Aorta (tissue), 5 donors: ENCODE measurements at regions of chr1 and their contacts with region 1.

Region 1: DNA sequence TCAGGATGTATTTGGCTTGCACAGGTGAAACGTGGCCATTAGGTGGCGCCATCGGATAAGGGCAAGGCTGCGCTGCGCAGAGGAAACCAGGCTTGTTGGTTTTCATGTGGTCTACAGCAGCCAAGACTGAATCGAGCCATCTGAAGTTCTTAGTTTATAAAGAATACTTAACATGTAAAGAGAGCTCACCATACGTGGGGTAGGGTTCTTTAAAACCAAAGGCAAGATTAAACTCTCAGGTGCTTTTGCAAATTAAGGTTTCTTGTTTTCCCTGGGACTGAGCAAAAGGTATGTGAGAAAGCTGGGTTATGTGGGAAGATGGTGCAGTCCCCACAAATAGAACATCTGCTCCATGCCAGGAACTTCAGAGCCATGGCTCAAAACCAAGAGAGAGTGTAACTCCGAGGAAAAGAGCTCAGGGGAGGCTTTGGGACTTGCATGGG is 9.3 kb downstream of the MASP2 start:
- DNase-seq: peak; percentile 90 to 95
- ATAC-seq: peak; percentile 94
- H3K4me3 ChIP-seq: no peak overlapping the region
- H3K27ac ChIP-seq: no peak overlapping the region
- H3K4me1 ChIP-seq: peaks cover 0 to 2% of the 10 kb centered on the region in 2 donors
- H3K27me3 ChIP-seq: no peaks in the 10 kb centered on the region

Region 2: GRCh38 chr1:10057343-10057742 is 980.4 kb before region 1 on chr1:
- intact Hi-C with region 1: no loop called
- DNase-seq: peak; percentile 67 to 81
- ATAC-seq: peak; percentile 74
- H3K4me3 ChIP-seq: no peak overlapping the region
- H3K27ac ChIP-seq: no peak overlapping the region
- H3K4me1 ChIP-seq: no peaks in the 10 kb centered on the region
- H3K27me3 ChIP-seq: no peaks in the 10 kb centered on the region

Region 3: GRCh38 chr1:11059990-11060830 is 22.4 kb after region 1 on chr1 and contains the start of gene SRM:
- intact Hi-C with region 1: loop called in 1 of 2 experiments (anchors 1 kb)
- DNase-seq: peak; percentile 93 to 96
- ATAC-seq: peak; percentile 98
- H3K4me3 ChIP-seq: peak within 1 kb of the TSS; percentile 73
- H3K27ac ChIP-seq: peak within 1 kb of the TSS in 1 of 2 donors; percentile 46
- H3K4me1 ChIP-seq: no peaks in the 10 kb centered on the region
- H3K27me3 ChIP-seq: no peaks in the 10 kb centered on the region
- total RNA-seq, gene SRM: 48.9 to 71.2 TPM

Region 4: DNA sequence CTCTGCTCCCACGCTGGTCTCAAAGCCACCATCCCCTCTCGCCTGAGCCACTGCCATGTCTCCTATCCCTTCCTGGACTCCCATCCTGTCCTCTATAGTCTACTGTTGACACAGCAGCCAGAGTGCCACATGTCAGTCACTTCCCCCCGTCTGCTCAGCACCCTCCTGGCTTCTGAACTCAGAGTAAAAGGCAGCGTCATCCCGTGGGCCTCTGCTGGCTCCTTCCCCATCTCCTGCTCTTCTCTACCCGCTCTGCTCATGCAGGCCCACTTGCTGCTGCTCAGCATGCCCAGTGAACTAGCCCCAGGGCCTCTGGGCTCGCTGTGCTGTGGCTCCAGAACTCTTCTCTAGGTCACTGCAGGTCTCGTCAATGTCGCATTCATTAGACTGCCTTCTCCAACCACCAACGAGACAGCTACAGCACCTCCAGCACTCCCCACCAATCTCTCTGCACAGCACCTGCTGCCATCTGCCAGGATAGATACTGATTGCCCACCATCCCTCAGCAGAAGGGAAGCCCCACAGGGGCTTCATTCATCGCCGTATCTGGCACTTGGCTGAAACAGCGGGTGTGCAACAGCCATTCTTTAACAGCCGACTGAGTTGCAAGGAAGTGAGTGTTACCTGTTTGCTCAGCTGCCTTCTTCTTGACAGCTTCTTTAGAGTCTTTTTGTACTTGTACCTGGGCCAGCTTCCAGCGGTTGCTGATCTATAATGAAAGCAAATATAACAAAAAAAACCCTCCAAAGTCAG is 33.9 kb after region 1 on chr1:
- intact Hi-C with region 1: no loop called
- DNase-seq: peak in 1 of 2 donors; percentile 55
- ATAC-seq: no peak
- H3K4me3 ChIP-seq: no peak overlapping the region
- H3K27ac ChIP-seq: no peak overlapping the region
- H3K4me1 ChIP-seq: no peaks in the 10 kb centered on the region
- H3K27me3 ChIP-seq: no peaks in the 10 kb centered on the region

Region 5: GRCh38 chr1:11099310-11100149 is 61.8 kb after region 1 on chr1 and contains the start of gene EXOSC10:
- intact Hi-C with region 1: no loop called
- DNase-seq: peak; percentile 95 to 98
- ATAC-seq: peak; percentile 99
- H3K4me3 ChIP-seq: peak within 1 kb of the TSS; percentile 61 to 90
- H3K27ac ChIP-seq: peak within 1 kb of the TSS in 1 of 2 donors; percentile 28
- H3K4me1 ChIP-seq: no peaks in the 10 kb centered on the region
- H3K27me3 ChIP-seq: no peaks in the 10 kb centered on the region
- total RNA-seq, gene EXOSC10: 45.3 to 53.8 TPM